ENCODE measurements at regions of chr14 and their contacts with region 1.

Region 1: DNA sequence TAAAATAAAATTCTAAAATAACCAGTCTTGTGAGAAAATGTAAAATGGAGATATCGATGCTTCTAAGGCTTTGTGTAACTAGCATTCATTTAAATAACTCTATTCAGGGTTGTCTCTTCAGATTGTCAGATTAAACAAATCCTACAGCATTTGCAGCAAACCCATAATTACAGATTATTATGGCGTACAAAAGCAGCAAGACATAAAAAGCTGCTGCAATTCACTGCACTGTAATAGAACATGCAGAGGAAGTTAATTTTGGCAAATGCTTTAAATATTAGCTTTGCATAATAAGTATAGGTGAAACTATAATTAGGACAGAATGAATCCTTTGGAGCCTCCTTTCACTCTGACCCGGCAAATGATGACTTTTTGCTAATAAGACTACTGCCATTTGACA is 98.3 kb downstream of the INSM2 start:
- DNase-seq: no peak
- H3K4me3 ChIP-seq: no peak overlapping the region
- H3K27ac ChIP-seq: no peak overlapping the region
- H3K4me1 ChIP-seq: no peaks in the 10 kb centered on the region
- H3K27me3 ChIP-seq: no peaks in the 10 kb centered on the region
- CTCF ChIP-seq: no peak

Region 2: GRCh38 chr14:35617500-35617899 is 14.8 kb before region 1 on chr14:
- CTCF ChIA-PET with region 1: no interaction called
- POLR2A ChIA-PET with region 1: no interaction called
- intact Hi-C with region 1: no loop called
- DNase-seq: no peak
- H3K4me3 ChIP-seq: no peak overlapping the region
- H3K27ac ChIP-seq: no peak overlapping the region
- H3K4me1 ChIP-seq: no peaks in the 10 kb centered on the region
- H3K27me3 ChIP-seq: no peaks in the 10 kb centered on the region
- CTCF ChIP-seq: no peak

Region 3: DNA sequence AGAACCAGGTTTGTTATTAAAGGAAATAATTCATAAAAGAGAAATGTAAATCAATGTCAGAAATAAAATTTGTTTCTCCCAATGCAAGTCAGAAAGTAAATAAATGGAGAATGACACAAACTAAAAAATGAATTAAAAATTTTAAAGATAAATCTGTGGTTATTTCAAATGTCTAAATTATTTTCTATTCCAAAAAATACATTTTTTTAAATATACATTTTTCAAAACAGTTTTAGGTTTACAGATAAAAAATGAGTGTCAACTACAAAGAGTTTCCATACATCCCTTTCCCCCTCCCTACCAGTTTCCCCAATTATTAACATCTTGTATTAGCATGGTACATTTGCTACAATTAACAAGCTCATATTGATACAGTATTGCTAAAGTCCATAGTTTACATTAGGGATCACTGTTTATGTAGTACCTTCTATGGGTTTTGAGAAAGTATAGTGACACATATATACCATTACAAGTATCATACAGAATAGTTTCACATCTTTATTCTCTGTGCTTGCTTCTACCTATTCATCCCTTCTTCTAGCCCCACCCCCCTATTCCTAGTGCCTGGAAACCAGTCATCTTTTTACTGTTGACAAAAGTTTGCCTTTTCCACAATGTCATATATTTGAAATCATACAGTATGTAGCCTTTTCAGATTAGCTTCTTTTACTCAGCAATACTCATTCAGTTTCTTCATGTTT is 72.7 kb after region 1 on chr14:
- CTCF ChIA-PET with region 1: no interaction called
- POLR2A ChIA-PET with region 1: interaction called, 33 read pairs
- intact Hi-C with region 1: no loop called
- DNase-seq: no peak
- H3K4me3 ChIP-seq: no peak overlapping the region
- H3K27ac ChIP-seq: no peak overlapping the region
- H3K4me1 ChIP-seq: no peaks in the 10 kb centered on the region
- H3K27me3 ChIP-seq: no peaks in the 10 kb centered on the region
- CTCF ChIP-seq: no peak